AG04449 (cell line): ENCODE measurements at regions of chr11 and their contacts with region 1.

Region 1: DNA sequence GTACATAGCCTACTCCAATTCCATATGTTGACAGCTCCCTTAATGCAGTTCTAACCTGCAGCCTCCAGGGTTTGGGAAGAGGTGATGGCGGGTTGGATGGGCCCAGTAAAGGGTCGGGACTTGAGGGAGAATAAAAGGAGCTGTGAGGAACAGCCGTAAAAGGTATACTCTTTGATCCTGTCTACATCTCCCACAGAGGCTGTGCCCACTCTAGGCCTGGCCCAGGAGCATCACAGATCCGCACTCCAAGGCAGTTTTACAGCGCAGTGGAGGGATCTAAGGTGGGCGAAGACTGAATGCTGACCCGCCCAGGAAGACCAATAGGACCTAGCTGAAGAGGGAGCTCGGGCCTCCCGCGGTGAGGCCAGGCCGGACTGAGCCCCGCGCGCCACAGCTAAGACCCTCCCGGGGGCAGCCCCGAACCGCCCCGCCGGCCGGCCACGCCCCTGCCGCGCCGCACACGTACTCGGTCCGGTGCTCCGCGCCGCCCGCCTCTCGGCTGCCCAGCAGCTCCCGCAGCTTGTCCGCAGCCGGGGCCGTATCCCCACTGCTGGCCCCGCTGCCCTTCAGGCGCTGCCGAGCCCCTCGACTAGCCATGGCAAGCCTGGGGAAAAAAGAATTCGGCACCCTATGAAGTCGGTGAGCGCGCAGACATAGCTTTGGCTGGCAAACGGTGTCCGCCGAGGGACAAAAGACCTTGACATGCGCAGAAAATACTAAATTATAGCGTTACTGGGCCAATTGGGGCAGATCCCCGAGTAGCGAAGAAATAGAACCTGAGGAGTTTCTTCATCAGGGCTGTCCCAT is at the start of gene ALG9:
- DNase-seq: peak; percentile 24
- H3K4me3 ChIP-seq: peak within 1 kb of the TSS; percentile 90
- CTCF ChIP-seq: peak; percentile 43

Region 2: GRCh38 chr11:111851636-111852035 is 19.5 kb before region 1 on chr11:
- CTCF ChIA-PET with region 1: interaction called, 39 read pairs
- POLR2A ChIA-PET with region 1: interaction called, 4 read pairs
- DNase-seq: no peak
- H3K4me3 ChIP-seq: no peak overlapping the region
- CTCF ChIP-seq: peak; percentile 35

Region 3: GRCh38 chr11:111860257-111860656 is 10.8 kb before region 1 on chr11:
- CTCF ChIA-PET with region 1: interaction called, 39 read pairs
- POLR2A ChIA-PET with region 1: no interaction called
- DNase-seq: no peak
- H3K4me3 ChIP-seq: no peak overlapping the region
- CTCF ChIP-seq: no peak